ENCODE measurements at regions of chr17 and their contacts with region 1.

Region 1: GRCh38 chr17:72556944-72557826 is 436.4 kb downstream of the SOX9 start:
- DNase-seq: peak; percentile 83
- ATAC-seq: peak; percentile 80
- H3K4me3 ChIP-seq: no peak overlapping the region
- H3K27ac ChIP-seq: peak overlapping the region; percentile 3; the same call in 1 of the 2 replicates
- H3K4me1 ChIP-seq: peaks cover 3 to 44% of the 10 kb centered on the region in 2 experiments; a peak in 3 of 4 replicates
- H3K27me3 ChIP-seq: no peaks in the 10 kb centered on the region
- CTCF ChIP-seq: peak; percentile 91 to 100 (median 99)
- POLR2A ChIP-seq: no peak
- RAD21 ChIP-seq: peak; percentile 99

Region 2: DNA sequence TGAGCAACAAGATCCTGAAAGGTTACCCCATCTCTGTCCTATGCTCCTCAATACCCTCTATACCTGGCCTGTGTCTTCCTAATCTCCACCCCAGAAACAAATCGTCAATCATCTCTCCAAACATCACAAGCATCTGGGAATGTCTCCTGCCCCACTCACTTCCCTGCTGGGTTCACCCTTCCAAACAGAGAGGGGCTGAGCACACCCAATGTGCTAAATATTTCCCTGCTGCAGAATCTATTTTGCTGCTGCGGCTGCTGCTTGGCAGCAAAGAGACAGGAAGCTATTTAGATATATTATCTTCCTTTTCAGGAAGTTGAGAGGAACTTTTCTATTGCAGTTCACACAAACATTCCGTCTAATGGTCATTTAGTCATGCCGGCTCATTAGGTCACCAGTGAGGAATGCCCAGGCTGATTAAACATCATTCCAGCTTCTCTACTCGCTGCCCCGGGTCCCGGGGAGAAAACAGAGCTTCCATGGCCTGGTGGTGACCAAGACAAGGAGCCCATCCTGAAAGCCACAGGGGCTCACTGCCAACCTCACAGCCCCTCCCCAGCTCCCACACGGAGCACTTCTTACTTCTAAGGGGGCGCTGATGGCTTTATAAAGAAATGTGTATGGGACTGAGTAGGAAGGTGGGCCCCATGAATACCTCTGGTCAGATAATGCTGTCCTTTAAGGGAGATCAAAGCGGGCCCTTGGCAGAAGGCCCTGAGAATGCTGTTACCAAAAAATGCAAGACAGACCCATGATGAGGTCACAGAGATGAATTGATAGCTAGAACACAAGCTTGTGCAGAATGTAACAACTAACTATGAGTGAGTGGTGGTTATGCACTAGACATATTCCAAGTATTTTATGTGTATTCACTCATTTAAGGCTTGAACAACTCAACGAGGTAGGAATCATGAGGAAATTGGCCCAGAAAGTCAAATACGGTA is 218.1 kb before region 1 on chr17:
- CTCF ChIA-PET with region 1: no interaction called
- POLR2A ChIA-PET with region 1: no interaction called
- RAD21 ChIA-PET with region 1: no interaction called
- intact Hi-C with region 1: no loop called
- DNase-seq: peak; percentile 91
- ATAC-seq: peak; percentile 86
- H3K4me3 ChIP-seq: peak overlapping the region; percentile 1 to 42; a peak in 3 of 4 replicates
- H3K27ac ChIP-seq: peak overlapping the region; percentile 89
- H3K4me1 ChIP-seq: peaks cover 34 to 49% of the 10 kb centered on the region in 2 experiments
- H3K27me3 ChIP-seq: no peaks in the 10 kb centered on the region
- CTCF ChIP-seq: no peak
- POLR2A ChIP-seq: no peak
- RAD21 ChIP-seq: peak; percentile 36

Region 3: DNA sequence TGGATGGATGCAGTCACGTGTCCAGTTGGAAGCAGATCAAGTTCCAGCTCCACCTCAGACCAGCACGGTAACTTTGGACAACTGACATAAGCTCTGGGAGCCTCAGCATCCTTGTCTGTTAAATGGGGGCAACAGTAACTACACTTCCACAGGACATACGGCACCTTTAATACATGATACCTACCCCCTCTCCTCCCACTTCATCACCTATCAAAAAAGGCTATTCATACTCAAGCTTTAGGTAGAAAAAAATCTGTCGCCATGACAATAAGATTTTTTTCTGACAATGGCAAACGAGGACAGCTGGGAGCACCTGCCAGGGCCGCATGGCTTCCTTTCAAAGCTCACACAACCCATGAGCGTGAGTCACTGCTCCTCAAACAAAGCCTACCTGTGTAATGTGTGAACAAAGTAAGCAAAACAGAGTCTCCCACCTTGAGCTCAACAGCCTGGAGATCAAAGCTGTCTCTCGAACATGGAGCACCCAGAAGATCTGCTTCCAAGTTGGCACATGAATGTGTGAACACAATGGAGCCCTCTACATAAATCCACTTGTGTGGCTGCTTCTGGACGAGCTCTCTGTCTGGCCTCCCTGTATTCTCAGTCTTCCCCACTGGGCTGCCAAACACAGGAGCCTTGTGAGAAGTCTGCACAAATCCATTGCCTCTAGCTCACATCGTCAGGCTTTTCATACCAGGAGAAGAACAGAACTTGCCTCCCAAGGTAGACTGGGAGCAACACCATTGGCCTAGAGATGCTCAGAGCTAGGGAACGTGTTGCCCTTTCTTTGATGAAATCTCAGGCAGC is 23.3 kb after region 1 on chr17:
- CTCF ChIA-PET with region 1: interaction called, 14 read pairs
- POLR2A ChIA-PET with region 1: no interaction called
- RAD21 ChIA-PET with region 1: interaction called in 1 of 2 experiments, 3 read pairs
- intact Hi-C with region 1: no loop called
- DNase-seq: no peak
- ATAC-seq: peak; percentile 65
- H3K4me3 ChIP-seq: no peak overlapping the region
- H3K27ac ChIP-seq: no peak overlapping the region
- H3K4me1 ChIP-seq: peaks cover 9 to 44% of the 10 kb centered on the region in 2 experiments; a peak in 2 of 4 replicates
- H3K27me3 ChIP-seq: no peaks in the 10 kb centered on the region
- CTCF ChIP-seq: no peak
- POLR2A ChIP-seq: no peak
- RAD21 ChIP-seq: no peak

Region 4: DNA sequence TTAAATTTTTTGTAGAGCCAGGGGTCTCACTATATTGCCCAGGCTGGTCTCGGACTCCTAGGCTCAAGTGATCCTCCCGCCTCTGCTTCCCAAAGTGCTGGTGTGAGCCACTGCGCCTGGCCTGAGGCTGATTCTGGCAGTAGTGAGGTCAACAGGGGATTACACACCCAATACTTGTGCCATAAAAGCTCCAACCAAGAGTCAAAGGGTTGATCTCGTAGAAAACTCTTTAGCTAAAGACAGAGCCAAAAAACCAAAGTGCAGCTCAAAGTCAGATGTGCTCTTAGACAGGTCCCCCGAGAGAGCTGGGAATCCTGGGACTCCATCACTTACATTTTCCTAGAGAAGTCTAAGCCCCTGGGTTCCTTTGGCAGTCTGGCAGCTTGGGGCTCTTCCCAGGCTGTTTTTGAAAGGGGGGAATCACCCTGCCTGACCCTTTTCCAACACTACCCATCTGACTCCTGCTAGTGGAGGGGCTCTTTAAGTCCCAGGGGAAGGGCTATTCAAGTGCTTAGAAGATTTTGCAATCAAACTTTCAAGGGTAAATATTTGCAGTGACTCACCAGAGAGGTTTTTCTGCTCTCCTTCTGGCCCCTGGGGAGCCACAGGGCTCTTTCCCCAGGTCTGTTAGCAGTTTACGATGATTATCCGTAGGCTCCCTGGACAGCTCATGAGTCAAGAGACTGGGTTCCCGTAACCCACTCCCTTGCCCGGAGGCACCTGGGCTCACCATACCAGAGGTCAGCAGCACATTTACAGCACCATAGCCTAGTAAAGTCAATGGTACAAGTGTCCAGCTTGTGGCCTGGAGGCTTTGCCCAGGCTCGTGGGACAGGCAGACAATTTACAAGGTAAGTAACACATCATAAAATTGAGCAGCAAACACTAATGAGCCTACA is 126.6 kb after region 1 on chr17:
- CTCF ChIA-PET with region 1: interaction called, 34 read pairs
- POLR2A ChIA-PET with region 1: no interaction called
- RAD21 ChIA-PET with region 1: interaction called, 4 to 14 read pairs
- intact Hi-C with region 1: no loop called
- DNase-seq: peak; percentile 94
- ATAC-seq: peak; percentile 83
- H3K4me3 ChIP-seq: peak overlapping the region; percentile 2 to 30; a peak in 3 of 4 replicates
- H3K27ac ChIP-seq: peak overlapping the region; percentile 87
- H3K4me1 ChIP-seq: peaks cover 63 to 82% of the 10 kb centered on the region in 2 experiments
- H3K27me3 ChIP-seq: no peaks in the 10 kb centered on the region
- CTCF ChIP-seq: no peak
- POLR2A ChIP-seq: no peak
- RAD21 ChIP-seq: peak; percentile 43

Region 5: DNA sequence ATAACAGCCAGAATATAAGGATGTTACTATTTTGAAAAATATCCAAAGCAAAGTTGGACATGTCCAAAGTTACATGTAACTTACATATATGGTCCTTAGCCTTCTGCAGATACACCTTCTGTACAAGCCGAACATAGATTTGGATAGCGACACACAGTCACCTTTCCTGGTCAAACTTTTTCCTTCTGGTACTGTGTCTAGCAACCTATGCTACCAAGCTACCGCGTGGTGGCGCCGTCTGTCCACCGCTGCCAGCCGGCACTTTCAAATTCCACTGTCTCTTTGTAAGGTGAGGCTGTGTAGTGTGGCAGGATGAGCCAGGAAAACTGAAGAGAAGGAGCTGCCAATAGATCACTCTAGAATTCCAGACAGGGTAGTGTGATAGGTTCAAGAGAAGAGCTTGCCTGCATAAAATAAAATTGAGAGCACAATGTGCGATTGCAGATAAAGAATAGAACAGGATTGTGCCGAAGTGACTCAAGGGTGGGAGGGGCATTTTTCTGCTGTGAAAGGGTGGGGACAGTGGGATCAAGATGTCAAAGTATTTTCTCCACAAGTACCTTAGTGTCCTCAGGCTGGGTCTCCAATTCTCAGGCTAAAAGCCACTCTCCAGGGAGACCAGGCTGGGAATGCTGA is 168.4 kb after region 1 on chr17:
- CTCF ChIA-PET with region 1: interaction called, 448 read pairs
- POLR2A ChIA-PET with region 1: interaction called, 8 read pairs
- RAD21 ChIA-PET with region 1: interaction called, 15 to 21 read pairs
- intact Hi-C with region 1: loop called (anchors 1 kb)
- DNase-seq: peak; percentile 66
- ATAC-seq: peak; percentile 83
- H3K4me3 ChIP-seq: no peak overlapping the region
- H3K27ac ChIP-seq: no peak overlapping the region
- H3K4me1 ChIP-seq: peaks cover 0 to 34% of the 10 kb centered on the region in 2 experiments; a peak in 1 of 4 replicates
- H3K27me3 ChIP-seq: no peaks in the 10 kb centered on the region
- CTCF ChIP-seq: peak; percentile 95 to 100 (median 98)
- POLR2A ChIP-seq: no peak
- RAD21 ChIP-seq: peak; percentile 98

Region 6: DNA sequence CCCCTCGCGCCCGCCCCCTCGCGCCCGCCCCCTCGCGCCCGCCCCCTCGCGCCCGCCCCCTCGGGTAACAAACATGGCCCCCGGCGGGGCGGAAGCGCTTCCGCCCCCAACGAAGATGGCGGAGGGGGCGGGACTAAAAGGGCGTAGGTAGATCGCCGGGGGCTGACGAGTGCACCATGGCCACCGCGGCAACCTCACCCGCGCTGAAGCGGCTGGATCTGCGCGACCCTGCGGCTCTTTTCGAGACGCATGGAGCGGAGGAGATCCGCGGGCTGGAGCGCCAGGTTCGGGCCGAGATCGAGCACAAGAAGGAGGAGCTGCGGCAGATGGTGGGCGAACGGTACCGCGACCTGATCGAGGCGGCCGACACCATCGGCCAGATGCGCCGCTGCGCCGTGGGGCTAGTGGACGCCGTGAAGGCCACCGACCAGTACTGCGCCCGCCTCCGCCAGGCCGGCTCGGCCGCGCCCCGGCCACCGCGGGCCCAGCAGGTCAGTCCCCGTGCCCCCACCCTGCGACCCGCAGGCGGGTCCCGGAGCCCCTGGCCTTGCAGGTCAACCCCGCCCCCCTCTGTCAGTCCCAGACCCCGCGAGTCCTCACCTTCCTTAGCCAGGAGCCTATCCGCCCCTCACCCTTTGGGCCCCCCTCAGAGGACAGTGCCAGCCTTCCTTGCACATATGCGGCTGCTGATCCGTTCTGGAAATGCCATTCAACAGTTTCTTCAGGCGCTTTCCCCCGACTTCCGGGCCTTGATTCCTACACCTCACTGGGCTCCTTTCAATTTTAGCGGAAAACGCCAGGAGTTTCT is 635.9 kb after region 1 on chr17 and contains the start of gene COG1:
- CTCF ChIA-PET with region 1: interaction called, 51 read pairs
- POLR2A ChIA-PET with region 1: interaction called, 3 read pairs
- RAD21 ChIA-PET with region 1: interaction called in 1 of 2 experiments, 3 read pairs
- intact Hi-C with region 1: loop called (anchors 1 kb)
- DNase-seq: peak; percentile 76
- ATAC-seq: peak; percentile 75
- H3K4me3 ChIP-seq: peak within 1 kb of the TSS; percentile 68 to 88
- H3K27ac ChIP-seq: peak within 1 kb of the TSS; percentile 98
- H3K4me1 ChIP-seq: peaks cover 0 to 35% of the 10 kb centered on the region in 2 experiments; a peak in 3 of 4 replicates
- H3K27me3 ChIP-seq: no peaks in the 10 kb centered on the region
- CTCF ChIP-seq: 0 out of 6 replicates have a peak, but pooled peaks of 1 of the 3 experiments have one; percentile 7
- POLR2A ChIP-seq: peak; percentile 7
- RAD21 ChIP-seq: no peak
- total RNA-seq, gene COG1: 44.6 TPM

Measured in HCT116 (cell line).